Left ventricle myocardium superior (tissue), 1 donor: ENCODE measurements at regions of chr10 and their contacts with region 1.

Region 1: GRCh38 chr10:63629363-63630084 is 108.3 kb downstream of the REEP3 start:
- DNase-seq: peak; percentile 97
- ATAC-seq: peak; percentile 77

Region 2: GRCh38 chr10:63166742-63167258 is 462.7 kb before region 1 on chr10:
- intact Hi-C with region 1: loop called (anchors 5 kb)
- DNase-seq: no peak
- ATAC-seq: peak; percentile 63

Region 3: GRCh38 chr10:63217120-63217605 is 412.4 kb before region 1 on chr10:
- intact Hi-C with region 1: loop called (anchors 10 kb)
- DNase-seq: no peak
- ATAC-seq: peak; percentile 82

Region 4: GRCh38 chr10:63711867-63712716 is 82.6 kb after region 1 on chr10:
- intact Hi-C with region 1: loop called (anchors 10 kb)
- DNase-seq: peak; percentile 94
- ATAC-seq: peak; percentile 93

Region 5: DNA sequence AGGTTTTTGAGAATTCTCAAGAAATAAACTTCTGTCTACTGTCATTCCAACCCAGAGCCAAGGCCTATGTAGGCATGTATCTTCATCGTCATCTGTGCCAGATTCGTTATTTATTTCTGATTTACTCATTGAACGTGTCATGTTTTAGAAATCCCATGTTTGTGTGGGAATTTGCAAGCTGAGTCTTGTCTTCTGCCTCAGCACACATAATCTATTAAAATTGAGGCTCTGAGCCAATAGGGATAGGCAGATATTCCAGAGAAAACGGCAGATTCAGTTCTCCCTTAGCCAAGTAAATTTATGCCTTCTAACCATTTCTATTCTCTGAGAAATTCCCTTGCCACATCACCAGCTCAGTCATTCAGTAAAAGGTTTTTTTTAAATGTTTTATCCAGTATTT is 336.3 kb after region 1 on chr10:
- intact Hi-C with region 1: no loop called
- DNase-seq: no peak
- ATAC-seq: no peak

Region 6: GRCh38 chr10:64394744-64395143 is 765.2 kb after region 1 on chr10:
- intact Hi-C with region 1: no loop called
- DNase-seq: no peak
- ATAC-seq: no peak